Panc1 (cell line): ENCODE measurements at regions of chr3 and their contacts with region 1.

Region 1: GRCh38 chr3:101261506-101261905 is 58.9 kb downstream of the IMPG2 start:
- DNase-seq: no peak
- ATAC-seq: no peak
- H3K4me3 ChIP-seq: no peak overlapping the region
- H3K27ac ChIP-seq: no peak overlapping the region
- H3K4me1 ChIP-seq: no peaks in the 10 kb centered on the region
- H3K27me3 ChIP-seq: no peaks in the 10 kb centered on the region; the same call in 1 of the 2 replicates
- CTCF ChIP-seq: no peak

Region 2: GRCh38 chr3:101229681-101230080 is 31.8 kb before region 1 on chr3:
- CTCF ChIA-PET with region 1: no interaction called
- POLR2A ChIA-PET with region 1: no interaction called
- in situ Hi-C with region 1: no loop called
- intact Hi-C with region 1: no loop called
- DNase-seq: no peak
- ATAC-seq: no peak
- H3K4me3 ChIP-seq: no peak overlapping the region
- H3K27ac ChIP-seq: no peak overlapping the region
- H3K4me1 ChIP-seq: no peaks in the 10 kb centered on the region
- H3K27me3 ChIP-seq: peaks cover 7% of the 10 kb centered on the region
- CTCF ChIP-seq: peak; percentile 58

Region 3: DNA sequence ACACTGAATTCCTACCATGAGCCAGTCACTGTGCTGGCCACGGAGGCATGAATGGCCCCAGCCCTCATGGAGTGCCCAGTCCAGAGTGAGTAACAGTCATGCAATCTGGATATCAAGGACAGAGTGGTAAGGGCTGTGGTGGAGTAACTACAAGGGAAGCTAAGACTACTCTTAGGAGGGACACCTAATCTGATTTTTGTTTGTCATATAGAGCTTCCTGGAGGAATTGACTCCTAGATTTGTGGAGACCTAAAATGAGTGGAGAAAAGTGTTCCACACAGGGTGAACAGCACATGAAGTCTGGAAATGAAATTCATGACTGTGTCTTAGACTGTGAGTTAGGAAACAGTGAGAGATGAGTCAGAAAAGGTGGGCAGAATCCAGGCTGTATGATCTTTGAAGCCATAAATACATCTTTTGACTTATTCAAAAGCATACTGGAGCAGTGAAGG is 807.7 kb after region 1 on chr3:
- CTCF ChIA-PET with region 1: interaction called, 12 read pairs
- POLR2A ChIA-PET with region 1: no interaction called
- in situ Hi-C with region 1: no loop called
- intact Hi-C with region 1: no loop called
- DNase-seq: no peak
- ATAC-seq: 0 out of 2 replicates have a peak, but pooled peaks have one; percentile 26
- H3K4me3 ChIP-seq: no peak overlapping the region
- H3K27ac ChIP-seq: no peak overlapping the region
- H3K4me1 ChIP-seq: no peaks in the 10 kb centered on the region
- H3K27me3 ChIP-seq: no peaks in the 10 kb centered on the region
- CTCF ChIP-seq: no peak